ENCODE measurements at regions of chr9 and their contacts with region 1.

Region 1: GRCh38 chr9:97900738-97901565 is 21.3 kb downstream of the TRMO start:
- DNase-seq: peak; percentile 59 to 74
- ATAC-seq: peak; percentile 77 to 86; a peak in 4 of 6 replicates
- H3K4me3 ChIP-seq: no peak overlapping the region
- H3K27ac ChIP-seq: peak overlapping the region in 1 of 2 experiments; percentile 46; a peak in 3 of 6 replicates
- H3K4me1 ChIP-seq: peaks cover 3% of the 10 kb centered on the region; the same call in 2 of the 3 replicates
- CTCF ChIP-seq: peak; percentile 89
- EP300 ChIP-seq: no peak
- POLR2A ChIP-seq: no peak
- RAD21 ChIP-seq: peak; percentile 88 to 89

Region 2: DNA sequence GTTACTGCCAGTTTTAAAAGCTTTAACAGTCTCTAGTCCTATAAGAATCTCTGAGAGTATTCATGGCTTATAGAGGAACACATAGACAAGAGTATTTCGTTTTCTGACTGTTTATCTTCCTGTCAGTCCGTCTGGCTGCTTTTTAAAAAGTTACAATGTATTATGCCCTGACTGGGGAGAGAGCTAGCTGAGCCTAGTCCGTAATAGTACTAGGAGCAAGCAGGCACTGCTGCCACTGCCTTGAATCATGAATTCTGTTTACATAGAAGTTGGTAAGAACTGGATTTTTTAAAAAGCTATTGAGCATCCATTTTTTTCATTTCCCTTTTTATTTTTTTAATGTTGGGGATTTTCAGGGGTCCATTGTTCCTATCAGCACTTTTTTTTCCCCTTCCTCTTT is 230.4 kb before region 1 on chr9:
- CTCF ChIA-PET with region 1: interaction called, 10 read pairs
- POLR2A ChIA-PET with region 1: no interaction called
- DNase-seq: no peak
- ATAC-seq: no peak
- H3K4me3 ChIP-seq: no peak overlapping the region
- H3K27ac ChIP-seq: no peak overlapping the region
- H3K4me1 ChIP-seq: no peaks in the 10 kb centered on the region
- CTCF ChIP-seq: no peak
- EP300 ChIP-seq: no peak
- POLR2A ChIP-seq: no peak
- RAD21 ChIP-seq: no peak

Region 3: DNA sequence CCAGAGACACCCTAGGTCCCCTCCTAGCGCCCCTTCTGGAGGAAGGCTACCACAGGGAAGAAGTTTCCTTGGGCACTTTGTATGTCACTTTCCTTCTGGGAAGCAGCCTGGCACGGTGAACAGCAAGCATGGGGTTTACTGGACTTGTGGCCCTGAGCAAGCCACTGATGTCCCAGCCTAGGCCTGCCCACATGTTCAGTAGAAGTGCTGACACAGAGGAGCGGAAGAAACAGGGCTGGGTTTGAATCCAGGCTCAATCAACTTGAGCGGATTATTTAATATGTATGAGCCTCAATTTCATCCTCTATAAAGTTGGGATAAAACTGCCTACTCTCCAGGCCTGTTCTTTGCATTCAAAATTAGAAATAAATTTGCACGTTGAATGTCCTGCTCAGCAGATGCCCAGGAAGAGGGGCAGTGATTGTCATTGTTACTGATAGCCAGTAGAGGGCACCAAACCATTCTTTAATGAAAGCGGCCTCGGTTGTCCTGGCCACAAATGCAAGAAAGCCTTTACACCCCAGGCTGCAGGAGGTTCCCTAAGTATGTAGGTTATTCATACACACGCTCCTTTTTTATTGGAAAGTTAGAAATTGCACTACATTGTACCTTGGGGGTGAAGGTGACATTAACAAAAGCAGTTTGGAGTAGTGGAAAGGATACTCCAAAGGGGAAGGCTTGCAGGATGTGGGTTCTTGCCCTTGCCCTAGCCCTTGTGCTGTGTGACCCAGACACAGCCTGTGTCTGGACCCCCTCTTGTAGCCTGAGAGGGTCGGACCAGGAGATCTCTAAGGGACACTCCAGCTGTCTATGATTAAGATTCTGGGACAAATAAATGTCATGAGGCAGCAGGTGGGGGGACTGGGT is 190.4 kb before region 1 on chr9:
- CTCF ChIA-PET with region 1: interaction called, 98 read pairs
- POLR2A ChIA-PET with region 1: no interaction called
- DNase-seq: peak; percentile 75 to 86
- ATAC-seq: peak; percentile 94 to 95
- H3K4me3 ChIP-seq: no peak overlapping the region
- H3K27ac ChIP-seq: peak overlapping the region; percentile 18 to 54; a peak in 3 of 6 replicates
- H3K4me1 ChIP-seq: peaks cover 20% of the 10 kb centered on the region
- CTCF ChIP-seq: peak; percentile 82
- EP300 ChIP-seq: no peak
- POLR2A ChIP-seq: no peak
- RAD21 ChIP-seq: peak; percentile 93 to 94

Region 4: DNA sequence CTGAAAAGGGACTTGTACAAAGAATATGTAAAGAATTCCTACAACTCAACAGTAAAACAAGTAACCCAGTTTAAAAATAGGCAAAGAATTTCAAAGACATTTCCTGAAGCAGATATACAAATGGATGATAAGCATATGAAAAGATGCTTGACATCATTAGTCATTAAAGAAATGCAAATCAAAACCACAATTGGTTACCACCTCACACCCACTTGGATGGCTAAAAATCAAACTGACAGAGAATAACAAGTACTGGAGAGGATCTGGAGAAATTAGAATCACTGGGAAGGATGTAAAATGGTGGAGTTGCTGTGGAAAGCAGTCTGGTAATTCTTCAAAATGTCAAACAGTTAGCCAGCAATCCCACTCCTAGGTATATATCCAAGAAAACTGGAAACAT is 60.4 kb before region 1 on chr9:
- CTCF ChIA-PET with region 1: interaction called, 17 read pairs
- POLR2A ChIA-PET with region 1: no interaction called
- DNase-seq: no peak
- ATAC-seq: no peak
- H3K4me3 ChIP-seq: no peak overlapping the region
- H3K27ac ChIP-seq: no peak overlapping the region
- H3K4me1 ChIP-seq: no peaks in the 10 kb centered on the region
- CTCF ChIP-seq: no peak
- EP300 ChIP-seq: no peak
- POLR2A ChIP-seq: no peak
- RAD21 ChIP-seq: no peak

Region 5: DNA sequence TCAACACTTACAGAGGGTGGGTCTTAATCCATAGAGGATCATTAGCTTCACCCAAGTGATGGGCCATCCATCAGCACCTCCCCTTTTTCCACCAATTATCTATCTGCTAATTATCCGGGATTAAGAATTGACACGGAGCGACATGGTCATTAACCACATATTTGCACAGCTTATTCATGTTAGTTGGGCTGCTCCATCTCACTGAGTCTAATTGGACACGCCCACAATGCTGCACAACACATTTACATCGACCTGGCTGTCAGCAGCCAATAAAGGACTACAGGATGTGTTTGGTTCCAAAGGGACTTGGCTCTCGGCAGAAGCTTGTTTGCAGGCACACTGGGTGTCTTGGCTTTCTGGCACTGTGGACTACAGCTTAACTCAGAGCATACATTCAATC is 26.3 kb before region 1 on chr9:
- CTCF ChIA-PET with region 1: interaction called, 15 read pairs
- POLR2A ChIA-PET with region 1: no interaction called
- DNase-seq: no peak
- ATAC-seq: no peak
- H3K4me3 ChIP-seq: no peak overlapping the region
- H3K27ac ChIP-seq: peak overlapping the region; percentile 84 to 90
- H3K4me1 ChIP-seq: peaks cover 34% of the 10 kb centered on the region
- CTCF ChIP-seq: no peak
- EP300 ChIP-seq: no peak
- POLR2A ChIP-seq: no peak
- RAD21 ChIP-seq: no peak

Region 6: DNA sequence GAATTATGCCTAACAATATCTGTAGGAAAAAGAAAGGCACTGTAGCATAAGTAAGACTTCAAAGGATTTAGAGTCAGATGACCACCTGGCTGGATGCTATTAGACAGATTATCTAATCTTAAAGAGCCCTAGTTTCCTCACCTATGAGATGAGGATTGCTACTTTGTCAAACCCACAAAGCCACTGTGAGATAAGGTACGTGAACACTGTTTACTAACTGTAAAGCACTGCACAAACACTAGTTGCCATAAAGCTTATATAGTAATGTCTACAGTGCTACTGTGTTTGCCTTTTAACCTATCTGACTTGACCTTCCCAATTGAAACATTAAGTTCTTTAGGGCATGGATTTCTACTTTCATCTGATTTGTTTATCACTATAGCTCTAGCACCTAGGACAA is 11.0 kb after region 1 on chr9:
- CTCF ChIA-PET with region 1: interaction called, 34 read pairs
- POLR2A ChIA-PET with region 1: no interaction called
- DNase-seq: no peak
- ATAC-seq: no peak
- H3K4me3 ChIP-seq: no peak overlapping the region
- H3K27ac ChIP-seq: no peak overlapping the region
- H3K4me1 ChIP-seq: no peaks in the 10 kb centered on the region
- CTCF ChIP-seq: no peak
- EP300 ChIP-seq: no peak
- POLR2A ChIP-seq: no peak
- RAD21 ChIP-seq: no peak

Region 7: DNA sequence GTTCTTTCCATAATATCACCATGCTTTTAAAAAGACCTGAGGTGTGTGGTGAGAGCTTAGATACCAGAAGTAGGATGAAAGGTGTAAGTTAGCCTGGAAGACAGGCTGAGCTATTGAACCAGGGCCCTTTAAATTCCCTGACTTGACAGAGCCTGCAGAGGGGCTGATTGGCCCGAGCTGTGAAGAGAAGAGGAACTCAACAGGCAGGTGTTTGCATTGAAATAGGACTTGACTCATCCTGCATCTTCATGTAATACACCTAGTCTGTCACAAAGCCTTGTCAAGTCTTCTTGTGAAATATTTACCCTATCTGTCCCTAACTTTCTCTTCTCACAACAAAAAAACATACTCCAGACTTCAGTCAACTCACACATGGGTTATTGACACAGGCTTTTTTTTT is 65.5 kb after region 1 on chr9:
- CTCF ChIA-PET with region 1: no interaction called
- POLR2A ChIA-PET with region 1: no interaction called
- DNase-seq: no peak
- ATAC-seq: no peak
- H3K4me3 ChIP-seq: no peak overlapping the region
- H3K27ac ChIP-seq: no peak overlapping the region
- H3K4me1 ChIP-seq: no peaks in the 10 kb centered on the region
- CTCF ChIP-seq: no peak
- EP300 ChIP-seq: no peak
- POLR2A ChIP-seq: no peak
- RAD21 ChIP-seq: no peak